ENCODE measurements at regions of chr2 and their contacts with region 1.

Region 1: GRCh38 chr2:44361330-44362206 is at the starts of genes CAMKMT and PREPL:
- DNase-seq: peak; percentile 98
- H3K4me3 Mint-ChIP-seq: peak within 1 kb of the TSS; percentile 93
- H3K27ac Mint-ChIP-seq: peak within 1 kb of the TSS; percentile 98
- H3K4me1 Mint-ChIP-seq: peaks cover 41% of the 10 kb centered on the region
- H3K27me3 Mint-ChIP-seq: no peaks in the 10 kb centered on the region
- total RNA-seq, gene CAMKMT: 11.6 to 12.0 TPM
- total RNA-seq, gene PREPL: 20.2 to 21.7 TPM

Region 2: DNA sequence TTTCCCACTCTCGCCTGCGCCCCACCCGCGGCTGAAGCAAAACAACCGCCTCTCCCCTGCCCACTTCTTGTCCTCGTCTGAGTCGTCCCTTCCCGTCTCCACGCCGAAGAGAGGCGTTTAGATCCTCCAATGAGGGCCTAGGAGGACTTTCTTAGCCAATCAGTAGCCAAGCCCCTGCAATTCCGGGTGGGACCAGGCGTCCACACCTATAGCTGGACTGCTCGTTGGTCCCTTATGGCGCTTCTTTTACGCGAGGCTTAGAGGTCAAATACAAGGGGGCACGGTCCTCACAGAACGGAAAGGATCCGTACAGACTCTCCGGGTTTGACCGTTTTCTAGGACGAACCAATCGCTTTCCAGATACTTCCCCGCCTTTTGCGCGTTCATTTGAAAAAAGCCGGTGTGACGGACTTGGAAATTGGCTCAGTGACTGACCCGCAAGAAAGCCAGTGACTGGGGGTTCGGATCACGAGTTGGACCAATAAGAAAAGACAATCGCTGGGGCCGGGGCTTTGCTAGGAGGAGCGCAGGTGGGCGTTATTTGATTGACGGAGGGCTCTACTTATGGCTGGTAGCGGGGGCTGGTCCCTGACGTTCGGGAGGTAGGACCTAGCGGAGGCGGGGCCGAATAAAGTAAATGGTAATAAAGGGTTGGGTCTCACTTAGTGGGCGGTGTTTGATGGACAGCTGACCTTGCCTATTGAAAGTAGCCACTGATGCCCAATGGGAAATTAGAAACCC is 193.5 kb before region 1 on chr2:
- CTCF ChIA-PET with region 1: interaction called, 3 read pairs
- POLR2A ChIA-PET with region 1: interaction called, 48 read pairs
- DNase-seq: peak; percentile 97
- H3K4me3 Mint-ChIP-seq: peak overlapping the region; percentile 99
- H3K27ac Mint-ChIP-seq: peak overlapping the region; percentile 99
- H3K4me1 Mint-ChIP-seq: peaks cover 36% of the 10 kb centered on the region
- H3K27me3 Mint-ChIP-seq: no peaks in the 10 kb centered on the region

Region 3: GRCh38 chr2:44342854-44343253 is 18.7 kb before region 1 on chr2:
- CTCF ChIA-PET with region 1: interaction called, 4 read pairs
- POLR2A ChIA-PET with region 1: interaction called, 11 read pairs
- DNase-seq: peak; percentile 21
- H3K4me3 Mint-ChIP-seq: no peak overlapping the region
- H3K27ac Mint-ChIP-seq: no peak overlapping the region
- H3K4me1 Mint-ChIP-seq: no peaks in the 10 kb centered on the region
- H3K27me3 Mint-ChIP-seq: no peaks in the 10 kb centered on the region

Region 4: GRCh38 chr2:44351088-44351487 is 10.5 kb before region 1 on chr2:
- CTCF ChIA-PET with region 1: interaction called, 4 read pairs
- POLR2A ChIA-PET with region 1: interaction called, 13 read pairs
- DNase-seq: no peak
- H3K4me3 Mint-ChIP-seq: no peak overlapping the region
- H3K27ac Mint-ChIP-seq: no peak overlapping the region
- H3K4me1 Mint-ChIP-seq: no peaks in the 10 kb centered on the region
- H3K27me3 Mint-ChIP-seq: no peaks in the 10 kb centered on the region